Dendritic cell treated with granulocyte-macrophage colony-stimulating factor and Interleukin-4, amounts not matched to agents 40 ng/mL and 50 ng/mL, for 4 days (primary cell): ENCODE measurements at regions of chr9 and their contacts with region 1.

Region 1: GRCh38 chr9:96383165-96383942 is at the start of gene SLC35D2:
- H3K4me3 Mint-ChIP-seq: peak within 1 kb of the TSS; percentile 82
- H3K27ac Mint-ChIP-seq: peak within 1 kb of the TSS; percentile 74
- H3K4me1 Mint-ChIP-seq: peaks cover 16% of the 10 kb centered on the region
- H3K27me3 Mint-ChIP-seq: no peaks in the 10 kb centered on the region

Region 2: GRCh38 chr9:96418074-96418809 is 34.9 kb after region 1 on chr9 and contains the start of gene ZNF367:
- intact Hi-C with region 1: loop called (anchors 1 kb)
- H3K4me3 Mint-ChIP-seq: peak within 1 kb of the TSS; percentile 85
- H3K27ac Mint-ChIP-seq: peak within 1 kb of the TSS; percentile 97
- H3K4me1 Mint-ChIP-seq: peaks cover 32% of the 10 kb centered on the region
- H3K27me3 Mint-ChIP-seq: no peaks in the 10 kb centered on the region